Pancreas (tissue), 10 donors: ENCODE measurements at regions of chr17 and their contacts with region 1.

Region 1: GRCh38 chr17:28029044-28029443 is 13.4 kb upstream of the NLK start:
- DNase-seq: no peak
- ATAC-seq: peak in 2 of 4 donors; percentile 1 to 2
- H3K4me3 ChIP-seq: no peak overlapping the region
- H3K27ac ChIP-seq: peak overlapping the region in 2 of 4 donors; percentile 68 to 69
- H3K4me1 ChIP-seq: peaks cover 6 to 30% (median 29%) of the 10 kb centered on the region in 3 donors
- H3K27me3 ChIP-seq: no peaks in the 10 kb centered on the region
- CTCF ChIP-seq: no peak

Region 2: DNA sequence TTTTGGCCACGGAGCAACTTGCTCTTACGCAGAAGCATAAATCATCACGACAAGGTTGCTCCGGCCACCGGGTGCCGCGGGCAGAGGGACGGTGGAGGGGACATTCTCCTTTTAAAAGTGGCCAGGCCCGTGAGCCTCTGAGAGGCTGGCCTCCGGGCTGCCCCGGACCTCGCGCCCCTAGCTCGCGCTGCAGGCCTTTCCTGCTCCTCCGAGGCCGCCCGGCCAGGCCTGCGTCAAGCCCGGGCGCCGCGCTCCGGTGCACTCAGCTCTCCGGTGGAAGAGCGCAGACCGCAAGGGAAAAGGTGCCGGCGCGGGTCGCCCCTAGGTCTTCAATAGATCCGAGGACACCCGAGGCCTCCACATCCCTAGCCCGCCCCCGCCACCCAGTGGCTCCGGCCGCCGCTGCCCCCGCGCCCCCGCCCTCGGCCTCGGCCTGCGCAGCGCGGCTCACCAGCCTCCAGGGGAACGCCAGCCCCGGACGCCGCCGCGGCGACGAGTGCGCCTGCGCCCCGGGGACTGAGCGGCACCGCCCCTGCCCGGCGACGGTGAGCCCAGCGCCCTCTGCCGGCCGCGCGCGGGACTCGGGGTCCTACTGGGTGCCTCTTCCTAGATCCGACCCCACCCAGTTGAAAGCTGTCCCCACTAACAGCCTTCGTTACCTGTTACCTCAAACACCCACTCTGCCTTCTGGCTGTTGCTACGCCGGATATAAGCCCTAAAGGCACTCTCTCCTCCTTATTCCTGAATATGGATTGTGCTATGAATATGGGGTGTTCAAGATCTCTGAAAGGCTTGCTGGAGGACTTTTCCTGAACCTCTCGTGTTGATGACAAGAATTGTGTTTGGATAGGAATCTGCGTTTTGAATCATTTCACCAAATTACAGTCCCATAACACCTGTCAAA is 135.9 kb before region 1 on chr17 and contains the start of gene LYRM9:
- intact Hi-C with region 1: loop called in 1 of 3 experiments (anchors 10 kb)
- DNase-seq: peak; percentile 86 to 100 (median 94)
- ATAC-seq: peak; percentile 92 to 98 (median 98)
- H3K4me3 ChIP-seq: peak within 1 kb of the TSS; percentile 56 to 80 (median 62)
- H3K27ac ChIP-seq: peak within 1 kb of the TSS; percentile 76 to 90 (median 82)
- H3K4me1 ChIP-seq: peaks cover 10 to 22% (median 15%) of the 10 kb centered on the region in 3 donors
- H3K27me3 ChIP-seq: no peaks in the 10 kb centered on the region
- CTCF ChIP-seq: peak; percentile 83 to 94 (median 89)
- total RNA-seq, gene LYRM9: 4.8 to 11.1 (median 8.4) TPM

Region 3: DNA sequence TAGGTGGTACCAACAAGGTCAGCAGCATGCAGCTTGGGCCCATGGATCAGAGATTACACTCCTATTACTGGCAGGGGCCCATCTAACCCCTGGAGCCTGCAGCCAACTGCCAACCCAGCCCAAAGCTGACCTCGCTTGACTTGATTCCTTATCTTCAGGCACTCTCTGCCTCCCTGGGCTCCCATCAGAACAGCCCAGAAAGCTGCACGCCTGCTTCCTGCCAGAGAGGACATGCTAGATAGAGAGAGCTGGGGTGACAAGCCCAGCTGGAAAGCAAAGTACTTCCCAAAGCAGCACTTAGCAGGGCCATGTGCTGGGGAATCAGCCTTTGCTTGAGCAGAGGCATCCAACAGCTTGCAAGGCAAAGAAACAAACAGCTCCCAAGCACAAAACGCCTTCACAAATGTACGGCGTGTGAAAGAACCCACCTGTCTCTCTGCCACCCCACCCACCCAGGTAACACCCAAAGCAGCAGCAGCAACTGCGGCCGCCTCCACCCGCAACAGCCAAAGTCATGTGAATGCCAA is 60.8 kb before region 1 on chr17:
- intact Hi-C with region 1: loop called in 1 of 3 experiments (anchors 10 kb)
- DNase-seq: peak; percentile 69 to 89 (median 80)
- ATAC-seq: peak; percentile 86 to 94 (median 90)
- H3K4me3 ChIP-seq: no peak overlapping the region
- H3K27ac ChIP-seq: peak overlapping the region; percentile 30 to 60 (median 36)
- H3K4me1 ChIP-seq: peaks cover 0 to 14% (median 13%) of the 10 kb centered on the region in 3 donors
- H3K27me3 ChIP-seq: no peaks in the 10 kb centered on the region
- CTCF ChIP-seq: no peak

Region 4: DNA sequence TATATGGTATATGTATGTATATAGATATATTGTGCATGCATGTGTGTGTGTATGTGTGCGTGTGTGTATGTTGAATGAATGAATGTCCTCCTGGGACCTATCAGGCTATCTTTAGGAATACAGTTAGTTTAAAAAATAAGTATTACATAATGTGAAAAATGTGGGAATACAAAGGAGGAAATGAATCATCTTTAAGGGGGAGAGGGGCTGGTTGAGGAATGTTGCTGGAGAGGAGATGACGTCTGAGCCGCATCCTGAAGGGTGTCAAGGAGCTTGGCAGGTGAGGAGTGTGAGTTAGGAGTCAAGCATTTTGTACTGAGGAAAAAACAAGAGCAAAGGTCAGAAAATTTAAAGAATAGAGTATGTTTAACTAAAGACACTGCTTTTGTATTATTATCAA is 49.0 kb before region 1 on chr17:
- intact Hi-C with region 1: no loop called
- DNase-seq: no peak
- ATAC-seq: no peak
- H3K4me3 ChIP-seq: no peak overlapping the region
- H3K27ac ChIP-seq: no peak overlapping the region
- H3K4me1 ChIP-seq: peaks cover 0 to 8% (median 5%) of the 10 kb centered on the region in 3 donors
- H3K27me3 ChIP-seq: no peaks in the 10 kb centered on the region
- CTCF ChIP-seq: no peak